AG04449 (cell line): ENCODE measurements at regions of chr19 and their contacts with region 1.

Region 1: DNA sequence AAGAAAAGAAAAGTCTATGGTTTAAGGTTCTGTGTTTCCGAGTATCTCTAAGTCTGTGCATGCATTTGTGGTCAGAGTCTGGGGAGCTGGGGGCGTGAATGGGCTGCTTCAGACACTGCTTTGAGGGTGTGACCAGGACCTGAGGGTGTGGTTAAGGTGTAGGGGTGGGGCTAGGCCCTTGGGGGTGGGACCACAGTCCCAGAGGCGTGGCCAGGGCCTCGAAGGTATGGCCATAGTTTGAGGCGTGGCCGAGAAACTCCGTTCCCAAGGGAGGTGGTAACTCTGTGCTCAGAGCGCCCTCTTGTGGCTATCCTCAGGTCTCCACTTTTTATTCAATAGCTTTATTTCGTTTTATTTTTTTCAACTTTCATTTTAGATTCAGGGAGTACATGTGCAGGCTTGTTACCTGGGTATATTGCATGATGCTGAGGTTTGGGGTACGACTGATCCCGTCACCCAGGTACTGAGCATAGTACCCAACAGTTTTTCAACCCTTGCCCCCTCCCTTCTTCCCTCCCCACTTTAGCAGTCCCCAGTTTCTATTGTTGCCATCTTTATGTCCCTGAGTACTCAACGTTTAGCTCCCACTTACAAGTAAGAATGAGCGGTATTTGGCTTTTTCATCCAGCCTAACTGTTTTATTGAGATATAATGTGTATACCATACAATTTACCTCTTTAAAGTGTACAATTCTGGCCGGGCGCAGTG is 7.0 kb upstream of the CBLC start:
- DNase-seq: no peak
- H3K4me3 ChIP-seq: no peak overlapping the region
- CTCF ChIP-seq: peak; percentile 67

Region 2: GRCh38 chr19:44576843-44577565 is 193.7 kb before region 1 on chr19:
- CTCF ChIA-PET with region 1: interaction called, 21 read pairs
- POLR2A ChIA-PET with region 1: no interaction called
- DNase-seq: no peak
- H3K4me3 ChIP-seq: no peak overlapping the region
- CTCF ChIP-seq: peak; percentile 68

Region 3: DNA sequence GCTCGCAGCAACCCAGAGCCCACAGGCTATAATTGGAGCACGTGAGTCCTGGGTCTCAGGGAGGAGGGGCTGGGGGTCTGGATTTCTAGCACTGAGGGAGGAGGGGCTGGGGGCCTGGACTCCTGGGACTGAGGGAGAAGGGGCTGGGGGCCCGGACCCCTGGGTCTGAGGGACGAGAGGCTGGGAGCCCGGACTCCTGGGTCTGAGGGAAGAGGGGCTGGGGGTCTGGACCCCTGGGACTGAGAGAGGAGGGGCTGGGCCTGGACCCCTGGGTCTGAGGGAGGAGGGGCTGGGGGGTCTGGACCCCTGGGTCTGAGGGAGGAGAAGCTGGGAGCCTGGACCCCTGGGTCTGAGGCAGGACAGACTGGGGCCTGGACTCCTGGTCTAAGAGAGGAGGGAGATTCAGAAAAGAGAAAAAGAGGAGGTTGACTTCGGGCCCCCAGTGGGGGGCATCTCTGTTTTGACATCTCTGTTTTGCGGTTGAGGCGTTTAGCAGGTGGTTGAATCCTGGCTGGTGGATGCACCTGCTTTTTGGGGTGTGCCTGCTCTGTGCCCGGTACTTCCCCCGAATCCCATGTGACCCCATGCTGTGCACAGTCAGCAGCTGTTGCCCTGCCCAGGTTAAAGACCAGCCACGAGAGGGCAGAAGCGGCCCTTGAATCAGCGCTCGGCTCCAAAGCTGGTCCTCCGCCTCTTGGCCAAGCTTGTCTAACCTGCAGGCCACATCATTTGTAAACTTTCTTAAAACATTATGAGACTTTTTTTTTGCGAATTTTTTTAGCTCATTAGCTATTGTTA is 116.5 kb before region 1 on chr19:
- CTCF ChIA-PET with region 1: interaction called, 12 read pairs
- POLR2A ChIA-PET with region 1: no interaction called
- DNase-seq: no peak
- H3K4me3 ChIP-seq: no peak overlapping the region
- CTCF ChIP-seq: peak; percentile 62

Region 4: DNA sequence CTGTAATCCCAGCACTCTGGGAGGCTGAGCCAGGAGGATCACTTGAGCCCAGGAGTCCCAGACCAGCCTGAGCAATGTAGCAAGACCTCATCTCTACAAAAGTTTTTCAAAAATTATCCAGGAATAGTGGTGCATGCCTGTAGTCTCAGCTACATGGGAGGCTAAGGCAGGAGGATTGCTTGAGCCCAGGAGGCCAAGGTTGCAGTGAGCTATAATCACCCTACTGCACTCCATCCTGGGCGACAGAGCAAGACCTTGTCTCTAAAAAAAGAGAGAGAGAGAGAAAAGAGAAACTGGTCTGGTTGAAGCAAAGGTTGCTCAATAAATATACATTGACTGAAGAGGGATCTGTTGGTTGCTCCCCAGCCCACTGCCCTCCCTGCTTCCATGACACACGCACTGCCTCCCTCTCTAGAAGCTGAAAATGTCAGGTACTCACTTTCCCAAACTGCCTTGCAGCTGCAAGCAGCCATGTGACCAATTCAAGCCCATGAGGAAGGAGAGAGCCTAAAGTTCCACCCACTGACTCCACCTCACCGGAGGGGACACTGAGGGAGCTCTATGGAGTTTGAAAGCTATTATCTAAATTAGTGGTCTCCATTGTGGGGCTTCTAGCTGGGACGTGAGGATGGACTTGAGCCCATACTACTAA is 57.7 kb before region 1 on chr19:
- CTCF ChIA-PET with region 1: interaction called, 694 read pairs
- POLR2A ChIA-PET with region 1: no interaction called
- DNase-seq: no peak
- H3K4me3 ChIP-seq: no peak overlapping the region
- CTCF ChIP-seq: no peak

Region 5: GRCh38 chr19:44752816-44753618 is 17.7 kb before region 1 on chr19:
- CTCF ChIA-PET with region 1: interaction called, 49 read pairs
- POLR2A ChIA-PET with region 1: interaction called, 4 read pairs
- DNase-seq: peak; percentile 89
- H3K4me3 ChIP-seq: peak overlapping the region; percentile 53
- CTCF ChIP-seq: peak; percentile 12

Region 6: GRCh38 chr19:44845612-44846454 is 75.1 kb after region 1 on chr19 and contains the start of gene NECTIN2:
- CTCF ChIA-PET with region 1: interaction called, 20 read pairs
- POLR2A ChIA-PET with region 1: interaction called, 3 read pairs
- DNase-seq: peak; percentile 88
- H3K4me3 ChIP-seq: peak within 1 kb of the TSS; percentile 89
- CTCF ChIP-seq: peak; percentile 72

Region 7: DNA sequence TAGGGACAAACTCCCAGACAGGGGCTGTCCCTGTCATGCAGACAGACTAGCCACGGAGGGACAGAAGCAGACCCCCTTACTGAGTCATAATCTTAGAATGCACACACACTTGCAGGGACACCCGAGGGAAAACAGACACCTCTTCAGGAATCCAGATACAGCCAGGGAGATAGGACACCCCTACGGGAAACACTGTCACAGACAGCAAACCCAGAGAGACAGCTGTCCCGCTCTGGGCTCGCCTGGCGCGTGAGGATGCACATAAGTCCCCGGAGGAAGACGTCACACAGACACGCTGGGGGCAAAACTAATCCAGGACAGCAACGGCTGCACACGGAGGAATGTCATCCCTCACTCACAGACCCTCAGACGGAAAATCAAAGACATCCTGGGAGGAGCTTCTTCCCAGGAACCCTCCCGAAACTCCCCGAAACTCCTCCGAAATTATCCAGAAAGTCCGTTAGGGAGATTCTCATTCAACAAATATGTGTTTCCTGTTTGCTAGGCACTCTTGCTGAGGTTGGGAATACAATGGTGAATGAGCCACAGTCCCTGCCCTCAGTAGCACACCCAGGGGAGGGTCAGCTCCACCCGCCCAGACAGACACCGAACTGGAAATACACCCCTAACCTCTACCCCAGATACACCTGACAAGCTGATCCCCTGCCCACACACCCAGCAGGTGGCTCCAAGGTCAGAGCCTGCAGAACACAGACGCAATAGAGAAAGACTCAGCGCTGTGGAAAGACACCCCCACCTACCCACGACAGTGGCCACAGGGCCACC is 105.2 kb after region 1 on chr19:
- CTCF ChIA-PET with region 1: no interaction called
- POLR2A ChIA-PET with region 1: no interaction called
- DNase-seq: no peak
- H3K4me3 ChIP-seq: no peak overlapping the region
- CTCF ChIP-seq: no peak

Region 8: DNA sequence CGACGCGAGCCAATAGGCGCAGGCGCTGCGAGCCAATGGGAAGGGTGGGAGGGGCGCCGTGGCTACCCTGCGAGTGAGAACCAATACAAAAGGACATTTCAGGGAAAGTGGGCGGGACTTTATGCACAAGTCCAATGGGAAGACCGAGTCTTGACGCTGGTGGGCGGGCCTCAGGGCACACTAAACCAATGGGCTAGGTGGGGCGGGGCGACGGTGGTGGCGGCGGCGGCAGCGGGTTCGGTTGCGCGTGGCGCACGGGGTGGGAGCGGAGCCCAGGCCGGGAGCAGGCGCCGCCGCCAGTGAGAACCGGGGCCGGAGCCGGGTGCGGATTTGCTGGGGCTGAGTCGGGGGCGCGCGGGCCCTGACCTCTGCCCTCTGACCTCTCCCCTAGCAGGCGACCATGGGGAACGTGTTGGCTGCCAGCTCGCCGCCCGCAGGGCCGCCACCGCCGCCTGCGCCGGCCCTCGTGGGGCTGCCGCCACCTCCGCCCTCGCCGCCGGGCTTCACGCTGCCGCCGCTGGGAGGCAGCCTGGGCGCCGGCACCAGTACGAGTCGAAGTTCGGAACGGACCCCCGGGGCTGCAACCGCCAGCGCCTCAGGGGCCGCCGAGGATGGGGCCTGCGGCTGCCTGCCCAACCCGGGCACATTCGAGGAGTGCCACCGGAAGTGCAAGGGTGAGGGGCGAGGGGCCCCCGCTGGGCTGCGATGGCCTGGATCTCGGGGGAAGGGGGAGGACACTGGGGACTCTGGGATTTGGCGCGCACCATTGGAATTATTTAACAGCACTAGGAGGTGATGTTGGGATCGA is 120.5 kb after region 1 on chr19 and contains the start of gene TOMM40:
- CTCF ChIA-PET with region 1: no interaction called
- POLR2A ChIA-PET with region 1: no interaction called
- DNase-seq: no peak
- H3K4me3 ChIP-seq: peak within 1 kb of the TSS; percentile 73
- CTCF ChIP-seq: no peak